Gastrocnemius medialis (tissue), 4 donors: ENCODE measurements at regions of chr19 and their contacts with region 1.

Region 1: GRCh38 chr19:13872695-13873389 is 4.1 kb upstream of the NANOS3 start:
- DNase-seq: no peak
- ATAC-seq: no peak
- H3K4me3 ChIP-seq: peak overlapping the region; percentile 18 to 46 (median 44)
- H3K27ac ChIP-seq: no peak overlapping the region
- H3K4me1 ChIP-seq: no peaks in the 10 kb centered on the region
- H3K27me3 ChIP-seq: peaks cover 0 to 12% (median 11%) of the 10 kb centered on the region in 3 donors
- CTCF ChIP-seq: no peak
- POLR2A ChIP-seq: no peak

Region 2: DNA sequence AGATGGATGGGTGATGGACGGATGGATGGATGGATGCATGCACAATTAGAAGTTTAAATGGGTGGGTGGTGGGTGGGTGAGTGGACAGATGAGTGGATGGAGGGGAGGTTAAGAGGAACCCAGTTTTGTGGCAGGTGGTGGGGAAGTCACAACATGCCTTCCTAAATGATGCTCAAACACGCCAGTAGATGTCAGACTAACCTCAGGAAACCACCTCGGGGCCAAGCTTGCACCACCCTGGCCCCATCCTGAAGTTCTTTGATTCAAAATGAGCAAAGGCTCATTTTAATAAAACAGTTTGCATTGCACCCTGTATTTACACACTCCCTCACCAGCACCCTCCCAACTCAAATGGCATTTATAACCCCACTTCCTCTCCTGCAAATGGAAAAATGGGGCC is 275.2 kb before region 1 on chr19:
- in situ Hi-C with region 1: loop called in 3 of 4 experiments (anchors 10 to 25 kb)
- intact Hi-C with region 1: no loop called
- DNase-seq: peak in 1 of 2 donors; percentile 2
- ATAC-seq: no peak
- H3K4me3 ChIP-seq: no peak overlapping the region
- H3K27ac ChIP-seq: no peak overlapping the region
- H3K4me1 ChIP-seq: no peaks in the 10 kb centered on the region
- H3K27me3 ChIP-seq: no peaks in the 10 kb centered on the region
- CTCF ChIP-seq: peak; percentile 16 to 51 (median 41)
- POLR2A ChIP-seq: no peak

Region 3: GRCh38 chr19:14048443-14049153 is 175.8 kb after region 1 on chr19:
- in situ Hi-C with region 1: loop called in 1 of 4 experiments (anchors 10 kb)
- intact Hi-C with region 1: no loop called
- DNase-seq: peak in 1 of 2 donors; percentile 46
- ATAC-seq: peak; percentile 54 to 88
- H3K4me3 ChIP-seq: no peak overlapping the region
- H3K27ac ChIP-seq: no peak overlapping the region
- H3K4me1 ChIP-seq: no peaks in the 10 kb centered on the region
- H3K27me3 ChIP-seq: no peaks in the 10 kb centered on the region
- CTCF ChIP-seq: peak; percentile 69 to 87 (median 74)
- POLR2A ChIP-seq: no peak

Region 4: DNA sequence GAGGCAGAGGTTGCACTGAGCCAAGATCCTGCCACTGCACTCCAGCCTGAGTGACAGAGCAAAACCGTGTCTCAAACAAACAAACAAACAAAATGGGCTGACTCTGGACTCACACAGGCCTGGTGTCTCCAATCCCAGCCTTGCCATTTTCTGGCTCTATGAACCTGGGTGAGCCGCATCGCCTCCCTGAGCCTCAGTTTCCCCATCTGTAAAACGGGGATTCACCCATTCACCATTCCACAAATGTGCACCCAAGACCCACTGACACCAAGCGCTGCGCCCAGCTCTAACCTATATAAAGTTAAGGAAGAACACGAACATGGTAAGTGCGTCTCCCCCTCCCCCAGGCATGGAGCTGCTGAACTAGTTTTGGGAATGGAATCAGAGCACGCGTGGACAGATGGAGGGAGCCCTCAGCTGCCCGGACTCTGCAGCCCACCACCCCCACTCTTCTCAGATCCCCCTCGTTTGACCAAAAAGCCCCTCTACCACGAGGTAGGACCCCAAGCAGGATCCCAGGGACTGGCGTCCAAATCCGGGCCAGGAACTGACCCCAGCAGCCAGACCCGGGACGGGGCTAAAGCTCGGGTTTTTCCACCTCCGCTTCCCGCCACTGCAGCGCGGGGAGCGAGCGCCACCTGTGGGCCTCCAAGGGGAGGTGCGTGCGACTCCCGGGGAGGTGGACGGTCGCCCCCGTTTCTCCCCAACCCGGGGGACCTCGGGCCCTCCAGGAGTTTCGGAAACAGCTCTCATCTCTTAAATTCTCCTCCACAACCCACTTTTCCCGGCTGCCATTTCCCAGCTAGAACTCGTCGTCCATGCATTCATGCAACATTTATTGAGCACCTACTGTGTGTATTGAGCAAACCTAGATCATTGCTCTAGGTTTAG is 475.4 kb after region 1 on chr19:
- in situ Hi-C with region 1: loop called (anchors 10 to 25 kb)
- intact Hi-C with region 1: no loop called
- DNase-seq: peak; percentile 25 to 37
- ATAC-seq: peak in 1 of 2 donors; percentile 73
- H3K4me3 ChIP-seq: peak overlapping the region in 3 of 4 donors; percentile 27 to 39 (median 34)
- H3K27ac ChIP-seq: no peak overlapping the region
- H3K4me1 ChIP-seq: peaks cover 0 to 5% of the 10 kb centered on the region in 2 donors
- H3K27me3 ChIP-seq: peaks cover 0 to 4% (median 0%) of the 10 kb centered on the region in 3 donors
- CTCF ChIP-seq: peak; percentile 73 to 98 (median 91)
- POLR2A ChIP-seq: no peak

Region 5: DNA sequence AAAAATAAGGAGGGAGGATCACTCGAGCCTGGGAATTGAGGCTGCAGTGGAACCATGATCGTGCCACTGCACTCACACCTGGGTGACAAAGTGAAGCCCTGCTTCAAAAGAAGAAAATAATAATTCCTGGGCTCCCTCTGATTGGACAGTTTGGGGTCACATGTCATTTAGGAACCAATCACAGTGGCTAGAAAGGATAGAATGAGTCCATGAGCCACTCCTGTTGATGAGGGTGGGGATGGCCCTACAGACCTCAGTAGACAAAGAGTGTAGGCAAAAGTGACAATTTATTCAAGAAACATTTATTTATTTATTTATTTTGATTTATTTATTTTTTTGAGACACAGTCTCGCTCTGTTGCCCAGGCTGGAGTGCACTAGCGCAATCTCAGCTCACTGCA is 481.6 kb after region 1 on chr19:
- in situ Hi-C with region 1: loop called (anchors 10 to 25 kb)
- intact Hi-C with region 1: no loop called
- DNase-seq: no peak
- ATAC-seq: no peak
- H3K4me3 ChIP-seq: no peak overlapping the region
- H3K27ac ChIP-seq: no peak overlapping the region
- H3K4me1 ChIP-seq: no peaks in the 10 kb centered on the region
- H3K27me3 ChIP-seq: peaks cover 0 to 3% (median 0%) of the 10 kb centered on the region in 3 donors
- CTCF ChIP-seq: no peak
- POLR2A ChIP-seq: no peak